B cell (primary cell): ENCODE measurements at regions of chr12 and their contacts with region 1.

Region 1: DNA sequence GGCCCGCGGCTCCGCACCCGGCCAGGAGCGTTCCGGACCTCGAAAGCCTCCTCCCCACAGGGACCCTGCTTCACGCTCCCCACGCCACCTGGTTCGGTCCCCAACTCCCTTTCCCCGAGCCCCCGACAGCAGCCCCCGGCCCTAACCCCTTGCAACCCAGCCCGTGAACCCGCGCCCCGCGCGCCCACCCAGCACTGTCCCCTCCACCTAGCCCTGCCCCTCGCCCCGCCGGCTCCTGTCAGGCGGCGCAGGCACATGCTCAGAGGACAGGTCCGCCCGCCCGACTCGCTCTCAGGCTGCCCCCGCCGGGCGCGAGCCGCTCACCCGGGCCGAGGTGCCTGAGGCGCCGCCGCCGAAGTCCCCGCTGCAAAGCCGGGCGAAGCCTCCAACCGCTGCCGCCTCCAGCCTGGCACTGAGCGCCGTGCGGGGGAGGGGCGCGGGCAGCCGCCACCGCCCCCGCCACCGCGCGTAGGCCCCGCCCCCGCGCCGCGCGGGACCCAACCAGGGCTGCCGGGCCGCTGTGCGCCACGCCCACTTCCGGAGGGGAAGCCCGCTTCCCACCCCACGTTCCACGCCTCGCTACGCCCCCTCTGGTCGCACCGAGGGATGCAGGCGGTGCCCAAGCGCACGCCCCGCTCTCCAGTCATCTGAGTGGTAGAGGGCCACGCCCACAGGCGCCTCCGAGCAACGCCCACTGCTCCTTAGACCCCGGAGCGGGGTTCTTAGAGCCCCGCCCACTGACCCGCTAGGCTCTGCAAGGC is at the start of gene CORO1C:
- DNase-seq: peak; percentile 97
- ATAC-seq: peak; percentile 73
- H3K4me3 ChIP-seq: peak within 1 kb of the TSS; percentile 70 to 92 (median 86)
- H3K4me3 Mint-ChIP-seq: peak within 1 kb of the TSS; percentile 99
- H3K27ac ChIP-seq: peak within 1 kb of the TSS; percentile 80 to 92
- H3K27ac Mint-ChIP-seq: peak within 1 kb of the TSS; percentile 98
- H3K4me1 ChIP-seq: peaks cover 11 to 16% of the 10 kb centered on the region in 2 donors
- H3K4me1 Mint-ChIP-seq: peaks cover 51% of the 10 kb centered on the region
- H3K27me3 ChIP-seq: no peaks in the 10 kb centered on the region
- H3K27me3 Mint-ChIP-seq: no peaks in the 10 kb centered on the region
- CTCF ChIP-seq: peak; percentile 83
- total RNA-seq, gene CORO1C: 58.9 and 68.0 TPM in 2 replicates

Region 2: GRCh38 chr12:107219301-107219700 is 1512.0 kb before region 1 on chr12:
- CTCF ChIA-PET with region 1: no interaction called
- POLR2A ChIA-PET with region 1: no interaction called
- intact Hi-C with region 1: no loop called
- DNase-seq: no peak
- ATAC-seq: no peak
- H3K4me3 ChIP-seq: no peak overlapping the region
- H3K4me3 Mint-ChIP-seq: no peak overlapping the region
- H3K27ac ChIP-seq: no peak overlapping the region
- H3K27ac Mint-ChIP-seq: no peak overlapping the region
- H3K4me1 ChIP-seq: no peaks in the 10 kb centered on the region
- H3K4me1 Mint-ChIP-seq: no peaks in the 10 kb centered on the region
- H3K27me3 ChIP-seq: peaks cover 0 to 8% (median 2%) of the 10 kb centered on the region in 4 experiments
- H3K27me3 Mint-ChIP-seq: peaks cover 25% of the 10 kb centered on the region
- CTCF ChIP-seq: no peak

Region 3: DNA sequence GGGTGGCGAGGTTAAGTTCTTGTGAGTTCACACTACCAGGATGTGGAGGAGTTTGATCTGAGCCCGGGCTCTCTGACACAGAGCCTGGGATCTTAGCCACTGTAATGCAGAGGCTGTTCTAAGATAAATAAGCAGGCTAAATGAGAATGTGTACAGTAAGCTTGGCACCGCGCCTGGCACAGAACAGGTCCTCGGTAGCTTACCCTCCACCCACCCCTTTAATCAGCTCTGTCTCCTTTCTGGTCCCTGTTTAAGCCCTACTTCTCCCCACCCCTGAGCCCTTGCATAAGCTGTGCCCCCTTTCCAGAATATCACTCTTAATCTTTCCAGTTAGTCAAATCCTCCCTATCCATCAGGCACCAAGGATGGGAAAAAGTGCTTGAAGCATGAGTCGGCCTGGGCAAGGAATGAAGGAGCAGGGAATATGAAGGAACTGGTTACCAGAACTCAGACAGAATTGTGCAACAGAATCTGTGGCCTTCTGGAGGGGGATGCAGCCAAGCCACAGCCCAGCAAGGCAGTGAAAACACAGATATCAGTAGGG is 359.4 kb before region 1 on chr12:
- CTCF ChIA-PET with region 1: no interaction called
- POLR2A ChIA-PET with region 1: no interaction called
- intact Hi-C with region 1: no loop called
- DNase-seq: no peak
- ATAC-seq: no peak
- H3K4me3 ChIP-seq: no peak overlapping the region
- H3K4me3 Mint-ChIP-seq: no peak overlapping the region
- H3K27ac ChIP-seq: no peak overlapping the region
- H3K27ac Mint-ChIP-seq: no peak overlapping the region
- H3K4me1 ChIP-seq: no peaks in the 10 kb centered on the region
- H3K4me1 Mint-ChIP-seq: no peaks in the 10 kb centered on the region
- H3K27me3 ChIP-seq: no peaks in the 10 kb centered on the region
- H3K27me3 Mint-ChIP-seq: peaks cover 4% of the 10 kb centered on the region
- CTCF ChIP-seq: no peak

Region 4: DNA sequence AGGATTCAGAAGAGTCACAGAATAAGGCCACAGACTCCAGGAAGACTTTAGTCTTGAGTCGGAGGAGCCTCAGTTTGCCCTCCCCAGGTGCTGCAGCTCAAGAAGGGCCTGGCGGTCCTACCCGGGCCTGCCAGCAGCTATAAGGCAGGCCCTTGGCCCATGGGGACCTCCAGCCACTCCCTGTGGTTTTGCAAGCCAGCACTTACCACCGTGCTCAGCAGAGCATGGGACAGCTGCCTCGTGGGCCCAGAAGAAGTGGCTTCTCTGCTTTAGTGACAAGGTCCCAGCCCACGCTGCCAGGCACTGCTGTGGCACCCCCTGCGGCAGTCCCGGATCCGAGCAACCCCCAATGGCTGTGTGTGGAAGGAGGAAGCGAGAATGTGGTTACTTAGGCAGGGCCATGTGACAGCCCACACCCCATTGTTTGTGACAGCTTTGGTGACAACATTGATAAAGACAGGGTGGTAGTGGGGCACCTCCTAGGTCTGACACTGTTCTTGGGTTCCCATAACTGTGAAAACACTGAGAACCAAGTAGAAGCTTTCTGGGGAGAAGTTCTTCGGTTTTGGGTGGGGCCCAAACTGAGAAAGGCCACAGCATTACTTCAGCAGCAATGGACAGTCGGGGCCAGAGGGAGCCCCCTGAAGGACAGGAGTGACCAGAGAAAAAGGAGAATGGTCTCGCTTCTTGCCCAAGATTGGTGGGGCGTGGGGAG is 97.6 kb before region 1 on chr12 and contains the start of gene SELPLG:
- CTCF ChIA-PET with region 1: interaction called, 4 read pairs
- POLR2A ChIA-PET with region 1: interaction called, 5 read pairs
- intact Hi-C with region 1: loop called (anchors 1 kb)
- DNase-seq: peak; percentile 98
- ATAC-seq: peak; percentile 75
- H3K4me3 ChIP-seq: peak within 1 kb of the TSS; percentile 62 to 87 (median 78)
- H3K4me3 Mint-ChIP-seq: peak within 1 kb of the TSS; percentile 99
- H3K27ac ChIP-seq: peak within 1 kb of the TSS; percentile 92 to 95
- H3K27ac Mint-ChIP-seq: peak within 1 kb of the TSS; percentile 100
- H3K4me1 ChIP-seq: peaks cover 78 to 88% of the 10 kb centered on the region in 2 donors
- H3K4me1 Mint-ChIP-seq: peaks cover 89% of the 10 kb centered on the region
- H3K27me3 ChIP-seq: no peaks in the 10 kb centered on the region
- H3K27me3 Mint-ChIP-seq: no peaks in the 10 kb centered on the region
- CTCF ChIP-seq: peak; percentile 41
- total RNA-seq, gene SELPLG: 6.1 and 6.2 TPM in 2 replicates

Region 5: GRCh38 chr12:108653082-108653516 is 78.2 kb before region 1 on chr12:
- CTCF ChIA-PET with region 1: no interaction called
- POLR2A ChIA-PET with region 1: no interaction called
- intact Hi-C with region 1: no loop called
- DNase-seq: no peak
- ATAC-seq: peak; percentile 63
- H3K4me3 ChIP-seq: no peak overlapping the region
- H3K4me3 Mint-ChIP-seq: no peak overlapping the region
- H3K27ac ChIP-seq: peak overlapping the region; percentile 2 to 35
- H3K27ac Mint-ChIP-seq: peak overlapping the region; percentile 79
- H3K4me1 ChIP-seq: peaks cover 14 to 15% of the 10 kb centered on the region in 2 donors
- H3K4me1 Mint-ChIP-seq: peaks cover 28% of the 10 kb centered on the region
- H3K27me3 ChIP-seq: no peaks in the 10 kb centered on the region
- H3K27me3 Mint-ChIP-seq: no peaks in the 10 kb centered on the region
- CTCF ChIP-seq: no peak

Region 6: DNA sequence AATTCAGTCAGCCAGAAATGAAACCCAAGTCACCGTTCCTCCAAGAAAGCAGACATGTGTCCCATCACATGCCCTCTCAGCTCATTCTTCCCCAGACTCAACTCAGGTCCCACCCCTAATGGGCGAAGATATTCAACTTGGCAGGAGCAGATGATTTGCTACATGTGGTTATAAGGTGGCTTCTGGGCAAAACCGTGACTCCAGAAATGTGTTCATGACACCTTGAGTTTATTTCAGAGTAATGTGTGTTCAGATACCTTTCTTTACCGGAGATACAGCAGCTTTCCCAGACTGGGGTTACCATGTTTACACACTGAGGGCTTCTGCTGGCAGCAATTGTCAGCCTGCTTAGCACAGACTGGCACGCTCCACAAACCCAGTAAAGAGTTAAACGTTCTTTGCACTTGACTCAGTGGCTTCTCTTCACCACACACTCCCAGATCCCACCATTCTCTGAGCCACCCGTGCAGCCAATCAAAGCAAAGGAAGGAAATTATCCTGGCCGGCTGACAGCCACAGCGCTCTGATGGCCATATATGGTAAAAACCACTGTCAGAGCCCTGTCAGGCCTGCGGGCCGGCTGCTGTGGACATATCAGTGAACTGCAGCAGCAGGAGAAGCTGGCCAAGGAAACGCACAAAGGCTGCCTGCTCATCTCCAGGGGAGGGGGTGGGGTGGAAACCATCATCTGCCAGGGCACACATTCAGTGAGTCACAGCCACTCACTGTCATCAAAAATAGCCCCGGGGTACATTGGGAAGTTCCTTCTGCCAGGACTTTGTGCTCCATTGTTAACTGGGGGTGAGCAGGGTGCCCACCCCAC is 39.9 kb before region 1 on chr12:
- CTCF ChIA-PET with region 1: no interaction called
- POLR2A ChIA-PET with region 1: interaction called, 9 read pairs
- intact Hi-C with region 1: loop called (anchors 1 kb)
- DNase-seq: peak; percentile 34
- ATAC-seq: peak; percentile 83
- H3K4me3 ChIP-seq: peak overlapping the region in 4 of 5 experiments; percentile 4 to 38 (median 31)
- H3K4me3 Mint-ChIP-seq: peak overlapping the region; percentile 82
- H3K27ac ChIP-seq: peak overlapping the region in 1 of 2 donors; percentile 40
- H3K27ac Mint-ChIP-seq: peak overlapping the region; percentile 74
- H3K4me1 ChIP-seq: peaks cover 32 to 35% of the 10 kb centered on the region in 2 donors
- H3K4me1 Mint-ChIP-seq: peaks cover 50% of the 10 kb centered on the region
- H3K27me3 ChIP-seq: no peaks in the 10 kb centered on the region
- H3K27me3 Mint-ChIP-seq: no peaks in the 10 kb centered on the region
- CTCF ChIP-seq: no peak

Region 7: DNA sequence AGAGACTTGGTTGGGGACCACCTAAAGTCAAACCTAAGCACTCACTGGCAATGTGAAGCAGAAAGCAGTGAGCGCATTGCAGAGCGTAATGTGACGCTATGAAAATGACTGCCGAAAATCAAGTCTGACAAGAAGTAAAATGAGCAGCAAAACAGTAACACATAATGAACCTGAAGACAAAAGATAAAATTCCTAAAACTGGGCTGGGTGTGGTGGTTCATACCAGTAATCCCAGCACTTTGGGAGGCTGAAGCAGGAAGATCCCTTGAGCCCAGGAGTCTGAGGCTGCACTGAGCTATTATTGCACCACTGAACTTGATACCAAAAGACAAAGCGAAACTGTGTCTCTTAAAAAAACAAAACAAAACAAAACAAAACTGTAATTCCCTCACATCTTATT is 16.4 kb before region 1 on chr12:
- CTCF ChIA-PET with region 1: interaction called, 3 read pairs
- POLR2A ChIA-PET with region 1: interaction called, 7 read pairs
- intact Hi-C with region 1: loop called (anchors 1 kb)
- DNase-seq: no peak
- ATAC-seq: no peak
- H3K4me3 ChIP-seq: peak overlapping the region in 1 of 5 experiments; percentile 30
- H3K4me3 Mint-ChIP-seq: no peak overlapping the region
- H3K27ac ChIP-seq: no peak overlapping the region
- H3K27ac Mint-ChIP-seq: peak overlapping the region; percentile 11
- H3K4me1 ChIP-seq: peaks cover 39% of the 10 kb centered on the region in 2 donors
- H3K4me1 Mint-ChIP-seq: peaks cover 54% of the 10 kb centered on the region
- H3K27me3 ChIP-seq: no peaks in the 10 kb centered on the region
- H3K27me3 Mint-ChIP-seq: no peaks in the 10 kb centered on the region
- CTCF ChIP-seq: no peak

Region 8: DNA sequence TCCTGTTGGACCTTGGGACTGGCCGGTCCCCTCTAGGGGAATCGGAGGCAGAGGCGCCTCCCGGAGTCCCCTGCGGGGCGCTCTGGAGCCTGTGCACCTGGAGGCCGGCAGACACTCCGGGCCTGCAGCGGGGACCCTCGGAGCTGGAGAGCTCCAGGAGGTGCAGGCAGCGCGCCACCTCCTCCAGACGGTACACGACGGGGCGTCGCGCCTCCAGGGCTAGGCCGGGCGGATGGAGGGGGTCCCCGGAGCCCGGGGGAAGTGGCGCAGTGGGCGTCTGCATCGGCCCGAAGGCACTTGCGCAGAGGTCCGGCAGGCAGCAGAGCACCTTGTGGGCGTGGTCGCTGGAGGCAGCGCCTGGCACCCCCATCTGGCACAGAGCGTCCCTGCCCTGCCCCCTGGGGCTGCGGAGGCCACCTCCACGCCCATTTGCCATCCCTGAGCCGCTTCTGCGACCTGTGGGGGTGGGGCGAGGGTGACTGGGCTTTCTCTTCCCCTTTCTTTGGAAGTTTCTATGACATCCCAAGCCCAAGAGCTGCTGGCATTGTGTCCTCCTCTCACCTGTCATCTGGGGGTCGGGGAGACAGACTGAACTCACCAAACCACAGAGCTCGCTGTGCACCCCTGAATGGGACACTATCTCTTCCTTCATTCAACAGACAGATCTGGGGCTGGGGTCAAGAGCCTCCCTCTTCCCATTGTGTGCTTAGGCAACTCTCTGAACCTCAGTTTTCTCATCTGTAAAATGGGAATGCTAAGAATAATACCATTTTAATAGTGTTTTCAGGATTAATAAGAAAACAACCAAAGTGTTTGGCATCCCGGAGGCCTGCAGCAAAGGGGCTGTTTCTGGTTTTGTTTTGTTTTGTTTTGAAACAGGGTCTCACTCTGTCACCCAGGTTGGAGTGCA is 37.6 kb after region 1 on chr12:
- CTCF ChIA-PET with region 1: interaction called, 4 read pairs
- POLR2A ChIA-PET with region 1: interaction called, 3 read pairs
- intact Hi-C with region 1: loop called (anchors 2 kb)
- DNase-seq: peak; percentile 72
- ATAC-seq: peak; percentile 92
- H3K4me3 ChIP-seq: peak overlapping the region in 4 of 5 experiments; percentile 36 to 55 (median 50)
- H3K4me3 Mint-ChIP-seq: peak overlapping the region; percentile 80
- H3K27ac ChIP-seq: no peak overlapping the region
- H3K27ac Mint-ChIP-seq: peak overlapping the region; percentile 32
- H3K4me1 ChIP-seq: peaks cover 16 to 20% of the 10 kb centered on the region in 2 donors
- H3K4me1 Mint-ChIP-seq: peaks cover 26% of the 10 kb centered on the region
- H3K27me3 ChIP-seq: peaks cover 0 to 7% (median 1%) of the 10 kb centered on the region in 4 experiments
- H3K27me3 Mint-ChIP-seq: peaks cover 4% of the 10 kb centered on the region
- CTCF ChIP-seq: no peak

Region 9: DNA sequence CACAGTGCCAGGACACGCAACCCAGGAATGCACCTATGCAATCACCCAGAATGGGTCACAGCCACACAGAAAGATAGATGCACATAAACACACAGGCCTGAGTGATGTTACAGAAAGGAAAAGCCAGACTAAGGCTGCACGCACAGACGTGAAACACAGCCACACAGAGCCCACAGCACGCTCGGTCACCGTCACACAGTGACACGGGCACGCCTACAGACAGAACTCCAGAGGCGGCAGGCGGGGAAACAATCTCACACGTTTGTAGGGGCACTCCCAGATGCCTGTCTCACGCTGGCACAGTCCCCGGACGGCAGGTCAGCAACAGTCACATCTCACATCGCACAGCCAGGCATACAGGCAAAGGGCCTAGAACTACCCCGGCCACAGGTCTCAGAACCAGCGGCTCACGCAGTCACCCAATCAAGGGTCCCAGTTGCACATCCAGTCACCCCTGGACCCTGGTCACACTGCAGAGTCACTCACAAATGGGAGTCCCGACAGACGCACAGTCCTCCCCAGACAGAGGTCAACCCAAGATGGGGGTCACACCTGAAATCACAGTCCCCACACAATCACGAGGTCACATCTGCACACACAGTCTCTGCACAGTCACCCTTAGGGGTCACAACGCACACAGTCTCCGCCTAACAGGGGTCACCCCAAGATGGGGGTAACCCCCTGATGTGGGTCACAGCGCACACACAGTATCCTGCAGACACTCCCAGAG is 125.3 kb after region 1 on chr12:
- CTCF ChIA-PET with region 1: no interaction called
- POLR2A ChIA-PET with region 1: no interaction called
- intact Hi-C with region 1: loop called (anchors 2 kb)
- DNase-seq: peak; percentile 59
- ATAC-seq: peak; percentile 2
- H3K4me3 ChIP-seq: peak overlapping the region; percentile 43 to 76 (median 71)
- H3K4me3 Mint-ChIP-seq: peak overlapping the region; percentile 99
- H3K27ac ChIP-seq: peak overlapping the region in 1 of 2 donors; percentile 56
- H3K27ac Mint-ChIP-seq: peak overlapping the region; percentile 96
- H3K4me1 ChIP-seq: peaks cover 29 to 44% of the 10 kb centered on the region in 2 donors
- H3K4me1 Mint-ChIP-seq: peaks cover 52% of the 10 kb centered on the region
- H3K27me3 ChIP-seq: peaks cover 0 to 4% (median 0%) of the 10 kb centered on the region in 4 experiments
- H3K27me3 Mint-ChIP-seq: no peaks in the 10 kb centered on the region
- CTCF ChIP-seq: no peak

Region 10: GRCh38 chr12:109052414-109053323 is 321.4 kb after region 1 on chr12 and contains the start of gene USP30:
- CTCF ChIA-PET with region 1: no interaction called
- POLR2A ChIA-PET with region 1: no interaction called
- intact Hi-C with region 1: loop called (anchors 5 kb)
- DNase-seq: peak; percentile 92
- ATAC-seq: peak; percentile 86
- H3K4me3 ChIP-seq: peak within 1 kb of the TSS; percentile 75 to 94 (median 89)
- H3K4me3 Mint-ChIP-seq: peak within 1 kb of the TSS; percentile 90
- H3K27ac ChIP-seq: peak within 1 kb of the TSS; percentile 78 to 82
- H3K27ac Mint-ChIP-seq: peak within 1 kb of the TSS; percentile 92
- H3K4me1 ChIP-seq: peaks cover 8 to 24% of the 10 kb centered on the region in 2 donors
- H3K4me1 Mint-ChIP-seq: peaks cover 22% of the 10 kb centered on the region
- H3K27me3 ChIP-seq: no peaks in the 10 kb centered on the region
- H3K27me3 Mint-ChIP-seq: no peaks in the 10 kb centered on the region
- CTCF ChIP-seq: no peak
- total RNA-seq, gene USP30: 24.7 and 32.5 TPM in 2 replicates